ENCODE measurements at regions of chr7 and their contacts with region 1.

Region 1: GRCh38 chr7:29748286-29749108 is 57.8 kb upstream of the WIPF3 start:
- DNase-seq: no peak
- ATAC-seq: 0 out of 3 replicates have a peak, but pooled peaks have one; percentile 35
- H3K4me3 ChIP-seq: no peak overlapping the region
- H3K27ac ChIP-seq: no peak overlapping the region
- H3K4me1 ChIP-seq: no peaks in the 10 kb centered on the region
- H3K27me3 ChIP-seq: peaks cover 0 to 1% of the 10 kb centered on the region in 2 experiments; a peak in 1 of 4 replicates
- CTCF ChIP-seq: peak; percentile 17 to 30 (median 24); a peak in 4 of 6 replicates
- EP300 ChIP-seq: no peak
- POLR2A ChIP-seq: no peak
- RAD21 ChIP-seq: peak; percentile 36

Region 2: DNA sequence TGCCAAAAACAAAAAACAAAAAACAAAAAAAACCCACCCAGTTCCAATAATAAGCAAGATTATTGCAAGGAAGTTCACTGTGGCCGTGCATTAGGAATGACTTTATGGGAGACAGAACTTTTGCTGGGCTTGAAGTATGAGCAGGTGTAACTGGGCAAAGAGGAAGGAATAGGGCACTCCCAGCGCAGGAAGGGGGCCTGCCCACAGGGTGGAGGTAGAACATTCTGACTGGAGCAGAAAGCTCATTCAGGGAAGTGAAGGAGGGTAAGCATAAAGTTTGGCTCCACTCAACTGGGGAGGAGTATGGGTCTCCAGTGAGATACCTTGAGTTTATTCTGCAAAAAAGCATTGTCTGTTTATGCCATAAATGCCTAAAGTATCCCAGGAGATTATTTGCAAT is 15.7 kb after region 1 on chr7:
- CTCF ChIA-PET with region 1: no interaction called
- POLR2A ChIA-PET with region 1: no interaction called
- RAD21 ChIA-PET with region 1: no interaction called
- SMC1A ChIA-PET with region 1: no interaction called
- in situ Hi-C with region 1: no loop called
- intact Hi-C with region 1: no loop called
- DNase-seq: no peak
- ATAC-seq: no peak
- H3K4me3 ChIP-seq: no peak overlapping the region
- H3K27ac ChIP-seq: no peak overlapping the region
- H3K4me1 ChIP-seq: no peaks in the 10 kb centered on the region
- H3K27me3 ChIP-seq: peaks cover 2 to 4% of the 10 kb centered on the region in 2 experiments; a peak in 1 of 4 replicates
- CTCF ChIP-seq: no peak
- EP300 ChIP-seq: no peak
- POLR2A ChIP-seq: no peak
- RAD21 ChIP-seq: no peak

Region 3: GRCh38 chr7:29915481-29916215 is 167.2 kb after region 1 on chr7:
- CTCF ChIA-PET with region 1: interaction called, 21 read pairs
- POLR2A ChIA-PET with region 1: no interaction called
- RAD21 ChIA-PET with region 1: no interaction called
- SMC1A ChIA-PET with region 1: interaction called, 17 read pairs
- in situ Hi-C with region 1: no loop called
- intact Hi-C with region 1: loop called (anchors 10 kb)
- DNase-seq: no peak
- ATAC-seq: no peak
- H3K4me3 ChIP-seq: no peak overlapping the region
- H3K27ac ChIP-seq: no peak overlapping the region
- H3K4me1 ChIP-seq: no peaks in the 10 kb centered on the region
- H3K27me3 ChIP-seq: no peaks in the 10 kb centered on the region
- CTCF ChIP-seq: no peak
- EP300 ChIP-seq: no peak
- POLR2A ChIP-seq: no peak
- RAD21 ChIP-seq: no peak

Region 4: DNA sequence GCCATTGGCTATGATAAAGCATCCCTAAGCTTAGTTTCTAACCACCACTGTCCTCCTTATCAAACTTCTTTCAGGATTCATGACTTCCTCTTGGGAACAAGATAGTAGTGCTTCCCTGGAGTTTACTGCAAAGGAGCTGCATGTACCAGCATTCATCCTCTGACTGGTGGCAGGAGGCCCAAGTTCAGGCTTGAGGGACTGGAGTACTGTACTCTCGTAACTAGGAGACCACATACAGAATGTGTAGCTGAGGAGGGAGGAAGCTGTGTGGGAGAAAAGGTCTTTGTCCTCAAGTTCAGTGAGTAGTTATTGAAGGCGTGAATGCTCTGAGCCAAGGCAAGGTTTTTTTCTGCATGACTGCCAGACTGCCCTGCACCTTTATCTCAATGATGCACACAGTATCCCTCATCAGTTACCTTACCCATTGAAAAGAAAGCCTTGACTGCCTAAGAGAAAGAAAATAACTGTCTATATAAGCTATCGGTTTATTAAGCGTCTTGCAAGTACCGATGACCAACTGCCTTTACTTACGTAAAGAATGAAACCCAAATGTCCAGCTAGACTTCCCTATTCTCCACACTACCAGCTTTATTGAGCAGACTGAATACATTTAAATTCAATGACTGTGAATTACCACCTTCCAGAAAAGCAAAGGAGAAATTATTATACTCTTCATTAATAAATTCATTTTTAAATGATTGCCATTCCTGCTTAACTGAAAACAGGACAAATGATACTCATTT is 228.3 kb after region 1 on chr7:
- CTCF ChIA-PET with region 1: no interaction called
- POLR2A ChIA-PET with region 1: no interaction called
- RAD21 ChIA-PET with region 1: no interaction called
- SMC1A ChIA-PET with region 1: no interaction called
- in situ Hi-C with region 1: no loop called
- intact Hi-C with region 1: no loop called
- DNase-seq: no peak
- ATAC-seq: no peak
- H3K4me3 ChIP-seq: no peak overlapping the region
- H3K27ac ChIP-seq: no peak overlapping the region
- H3K4me1 ChIP-seq: peaks cover 3% of the 10 kb centered on the region; the same call in 1 of the 2 replicates
- H3K27me3 ChIP-seq: no peaks in the 10 kb centered on the region
- CTCF ChIP-seq: no peak
- EP300 ChIP-seq: no peak
- POLR2A ChIP-seq: no peak
- RAD21 ChIP-seq: no peak

Region 5: GRCh38 chr7:30074422-30075030 is 326.0 kb after region 1 on chr7:
- CTCF ChIA-PET with region 1: interaction called, 8 read pairs
- POLR2A ChIA-PET with region 1: interaction called, 3 read pairs
- RAD21 ChIA-PET with region 1: no interaction called
- SMC1A ChIA-PET with region 1: no interaction called
- in situ Hi-C with region 1: loop called (anchors 10 kb)
- intact Hi-C with region 1: no loop called
- DNase-seq: no peak
- ATAC-seq: peak; percentile 57
- H3K4me3 ChIP-seq: no peak overlapping the region
- H3K27ac ChIP-seq: no peak overlapping the region
- H3K4me1 ChIP-seq: no peaks in the 10 kb centered on the region
- H3K27me3 ChIP-seq: no peaks in the 10 kb centered on the region
- CTCF ChIP-seq: peak; percentile 41 to 55 (median 55); a peak in 3 of 6 replicates
- EP300 ChIP-seq: no peak
- POLR2A ChIP-seq: no peak
- RAD21 ChIP-seq: peak; percentile 40; the same call in 1 of the 2 replicates

Measured in GM12878 (cell line).